H1 (cell line): ENCODE measurements at regions of chr22 and their contacts with region 1.

Region 1: DNA sequence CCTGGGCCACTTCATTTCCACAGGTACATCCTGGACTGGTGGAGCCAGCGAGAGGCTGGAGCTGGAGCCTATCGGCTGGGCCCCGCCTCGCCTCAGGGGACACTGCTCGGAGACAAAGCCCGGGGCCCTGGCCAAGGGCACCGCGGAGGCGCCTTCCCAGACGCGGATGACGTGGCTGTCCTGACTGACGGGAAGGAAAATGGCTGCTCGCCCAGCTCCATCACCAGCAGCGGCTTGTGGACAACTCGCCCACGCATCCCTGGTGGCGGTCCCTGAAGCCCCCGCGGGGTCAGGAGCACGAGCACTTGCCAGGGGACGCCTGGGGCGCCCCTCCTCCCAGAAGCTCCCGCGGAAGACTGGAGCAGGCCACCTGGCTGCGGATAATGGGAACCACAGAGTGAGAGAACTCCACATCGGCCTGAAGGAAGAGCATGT is 49.6 kb downstream of the CECR2 start:
- DNase-seq: peak in 1 of 2 experiments; percentile 67
- H3K4me3 ChIP-seq: no peak overlapping the region
- H3K27ac ChIP-seq: no peak overlapping the region
- H3K4me1 ChIP-seq: peaks cover 2 to 19% (median 7%) of the 10 kb centered on the region in 4 experiments; a peak in 5 of 7 replicates
- H3K27me3 ChIP-seq: no peaks in the 10 kb centered on the region
- CTCF ChIP-seq: peak; percentile 27 to 38 (median 32); a peak in 2 of 4 replicates
- EP300 ChIP-seq: no peak
- POLR2A ChIP-seq: no peak
- RAD21 ChIP-seq: peak in 1 of 2 experiments; percentile 39; a peak in 2 of 4 replicates

Region 2: GRCh38 chr22:17348461-17349113 is 70.3 kb before region 1 on chr22:
- CTCF ChIA-PET with region 1: no interaction called
- POLR2A ChIA-PET with region 1: no interaction called
- DNase-seq: no peak
- H3K4me3 ChIP-seq: no peak overlapping the region
- H3K27ac ChIP-seq: no peak overlapping the region
- H3K4me1 ChIP-seq: no peaks in the 10 kb centered on the region
- H3K27me3 ChIP-seq: no peaks in the 10 kb centered on the region
- CTCF ChIP-seq: no peak
- EP300 ChIP-seq: no peak
- POLR2A ChIP-seq: no peak
- RAD21 ChIP-seq: no peak

Region 3: GRCh38 chr22:17407643-17408042 is 11.3 kb before region 1 on chr22:
- CTCF ChIA-PET with region 1: interaction called, 14 read pairs
- POLR2A ChIA-PET with region 1: interaction called, 4 read pairs
- DNase-seq: no peak
- H3K4me3 ChIP-seq: no peak overlapping the region
- H3K27ac ChIP-seq: no peak overlapping the region
- H3K4me1 ChIP-seq: peaks cover 6 to 12% (median 8%) of the 10 kb centered on the region in 4 experiments; a peak in 6 of 7 replicates
- H3K27me3 ChIP-seq: no peaks in the 10 kb centered on the region
- CTCF ChIP-seq: no peak
- EP300 ChIP-seq: no peak
- POLR2A ChIP-seq: no peak
- RAD21 ChIP-seq: no peak

Region 4: DNA sequence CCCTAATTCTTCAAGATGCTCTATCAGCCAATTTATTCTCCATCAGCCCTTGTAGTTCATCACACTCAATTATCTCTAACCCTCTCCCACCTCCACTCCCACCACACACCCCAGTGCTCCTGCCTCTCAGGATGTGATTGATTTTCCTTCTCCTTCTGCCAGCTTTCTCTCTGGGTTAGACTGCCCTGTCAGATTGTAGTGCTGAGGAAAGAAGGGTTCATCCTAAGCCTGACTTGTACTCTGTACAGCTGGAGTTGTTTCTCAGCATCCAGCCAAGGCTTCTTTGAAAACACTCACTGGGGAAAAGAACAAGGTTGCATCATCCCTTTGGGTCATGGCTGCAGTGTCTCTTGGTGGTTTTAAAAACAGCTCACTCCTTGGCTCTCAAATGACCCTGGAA is 11.5 kb after region 1 on chr22:
- CTCF ChIA-PET with region 1: interaction called, 10 read pairs
- POLR2A ChIA-PET with region 1: interaction called, 5 read pairs
- DNase-seq: no peak
- H3K4me3 ChIP-seq: no peak overlapping the region
- H3K27ac ChIP-seq: no peak overlapping the region
- H3K4me1 ChIP-seq: peaks cover 7 to 22% (median 14%) of the 10 kb centered on the region in 4 experiments
- H3K27me3 ChIP-seq: no peaks in the 10 kb centered on the region
- CTCF ChIP-seq: no peak
- EP300 ChIP-seq: no peak
- POLR2A ChIP-seq: no peak
- RAD21 ChIP-seq: no peak

Region 5: DNA sequence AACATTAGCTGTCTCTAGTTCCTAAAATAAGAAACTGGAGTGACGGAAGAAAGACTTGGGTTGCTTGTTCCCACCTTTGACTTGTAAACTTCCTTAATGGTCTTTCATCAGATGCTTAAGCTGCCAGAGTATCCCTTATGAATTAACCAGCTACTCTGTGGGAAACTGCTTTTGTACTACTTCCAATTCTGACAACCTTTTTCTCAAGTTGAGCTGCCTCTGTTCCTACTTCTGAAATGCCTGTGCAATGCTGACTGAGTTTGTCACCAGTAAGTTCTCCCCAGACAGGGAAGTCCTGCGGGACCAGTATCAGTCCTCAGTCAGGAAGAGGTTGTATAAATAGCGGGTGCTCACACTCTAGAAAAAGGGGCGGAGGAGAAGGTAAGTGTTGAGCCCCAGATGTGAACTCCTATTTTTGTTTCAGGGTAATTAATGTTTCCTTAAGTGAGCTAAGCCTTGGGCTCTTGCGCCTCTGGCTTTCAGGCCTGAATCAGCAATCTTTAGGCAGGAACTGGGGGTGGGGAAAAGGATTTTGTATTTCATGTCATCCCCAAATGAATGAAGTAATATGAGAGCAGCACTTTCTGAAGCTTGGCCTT is 17.6 kb after region 1 on chr22:
- CTCF ChIA-PET with region 1: interaction called, 18 read pairs
- POLR2A ChIA-PET with region 1: interaction called, 5 read pairs
- DNase-seq: no peak
- H3K4me3 ChIP-seq: peak overlapping the region in 2 of 4 experiments; percentile 4 to 42; a peak in 5 of 8 replicates
- H3K27ac ChIP-seq: no peak overlapping the region
- H3K4me1 ChIP-seq: peaks cover 12 to 31% (median 19%) of the 10 kb centered on the region in 4 experiments
- H3K27me3 ChIP-seq: no peaks in the 10 kb centered on the region
- CTCF ChIP-seq: no peak
- EP300 ChIP-seq: no peak
- POLR2A ChIP-seq: no peak
- RAD21 ChIP-seq: no peak

Region 6: GRCh38 chr22:17471886-17472535 is 53.1 kb after region 1 on chr22:
- CTCF ChIA-PET with region 1: no interaction called
- POLR2A ChIA-PET with region 1: no interaction called
- DNase-seq: no peak
- H3K4me3 ChIP-seq: no peak overlapping the region
- H3K27ac ChIP-seq: no peak overlapping the region
- H3K4me1 ChIP-seq: peaks cover 4 to 24% (median 19%) of the 10 kb centered on the region in 4 experiments
- H3K27me3 ChIP-seq: no peaks in the 10 kb centered on the region
- CTCF ChIP-seq: no peak
- EP300 ChIP-seq: no peak
- POLR2A ChIP-seq: no peak
- RAD21 ChIP-seq: no peak

Region 7: DNA sequence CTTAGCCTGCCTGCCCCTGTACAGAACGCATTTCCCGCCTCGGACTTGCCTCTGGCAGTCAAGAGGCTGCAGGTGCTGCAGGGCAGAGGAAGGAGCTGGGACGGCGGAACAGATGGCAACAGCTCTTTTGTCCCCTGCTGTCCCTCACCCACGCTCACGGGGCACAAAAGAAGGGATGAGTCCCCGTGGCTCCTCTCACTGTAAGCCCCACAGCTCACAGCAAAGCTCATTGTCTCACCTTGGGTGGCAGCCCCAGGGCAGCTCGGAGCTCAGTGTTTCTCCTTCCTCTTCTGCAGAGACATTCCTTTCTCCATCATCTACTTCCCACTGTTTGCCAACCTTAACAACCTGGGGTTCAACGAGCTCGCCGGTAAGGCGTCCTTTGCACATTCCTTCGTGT is 168.7 kb after region 1 on chr22:
- CTCF ChIA-PET with region 1: no interaction called
- POLR2A ChIA-PET with region 1: no interaction called
- DNase-seq: no peak
- H3K4me3 ChIP-seq: no peak overlapping the region
- H3K27ac ChIP-seq: no peak overlapping the region
- H3K4me1 ChIP-seq: no peaks in the 10 kb centered on the region
- H3K27me3 ChIP-seq: no peaks in the 10 kb centered on the region
- CTCF ChIP-seq: no peak
- EP300 ChIP-seq: no peak
- POLR2A ChIP-seq: no peak
- RAD21 ChIP-seq: no peak